ENCODE measurements at regions of chr1 and their contacts with region 1.

Region 1: DNA sequence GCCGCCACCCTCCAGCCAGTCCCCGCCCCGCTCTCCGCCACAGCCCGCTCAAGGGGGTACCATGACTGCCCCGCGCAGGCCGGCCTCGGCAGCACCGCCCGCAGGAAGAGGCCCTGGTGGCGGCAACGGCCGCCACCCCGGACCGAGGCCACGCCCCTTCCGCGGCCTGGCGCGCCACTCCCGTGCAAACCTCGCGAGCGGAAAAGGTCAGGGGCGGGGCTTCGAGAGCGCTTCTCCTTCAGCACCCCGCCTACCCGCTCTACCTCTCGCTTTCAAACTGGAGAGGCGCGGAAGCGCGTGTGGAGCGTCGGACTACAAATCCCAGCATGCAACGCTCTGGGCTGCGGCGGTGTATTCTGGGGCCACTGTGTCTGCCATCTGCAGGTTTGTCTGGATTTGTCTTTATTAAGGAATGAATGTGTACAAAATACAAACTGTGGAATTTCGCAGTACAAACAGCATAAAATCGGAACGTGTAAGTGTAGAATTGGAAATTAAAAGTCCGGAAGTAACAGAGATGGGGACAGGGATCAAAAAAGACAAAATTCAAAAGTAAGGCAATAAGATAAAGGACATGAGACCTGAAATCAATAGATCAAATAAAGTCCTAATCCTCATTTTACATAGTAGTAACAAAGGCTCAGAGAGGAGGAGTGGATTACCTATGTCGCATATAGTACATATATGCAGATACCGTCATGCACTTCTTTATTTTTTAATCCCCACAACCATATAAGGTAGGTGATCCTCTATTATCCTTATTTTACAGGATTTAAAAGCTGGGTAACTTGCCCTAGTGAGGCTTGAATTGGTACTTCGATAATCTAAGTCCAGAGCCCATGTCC is 464 bp upstream of the ADSS2 start:
- DNase-seq: peak; percentile 99
- H3K4me3 Mint-ChIP-seq: peak overlapping the region; percentile 97
- H3K27ac Mint-ChIP-seq: peak overlapping the region; percentile 86
- H3K4me1 Mint-ChIP-seq: peaks cover 37% of the 10 kb centered on the region
- H3K27me3 Mint-ChIP-seq: no peaks in the 10 kb centered on the region

Region 2: DNA sequence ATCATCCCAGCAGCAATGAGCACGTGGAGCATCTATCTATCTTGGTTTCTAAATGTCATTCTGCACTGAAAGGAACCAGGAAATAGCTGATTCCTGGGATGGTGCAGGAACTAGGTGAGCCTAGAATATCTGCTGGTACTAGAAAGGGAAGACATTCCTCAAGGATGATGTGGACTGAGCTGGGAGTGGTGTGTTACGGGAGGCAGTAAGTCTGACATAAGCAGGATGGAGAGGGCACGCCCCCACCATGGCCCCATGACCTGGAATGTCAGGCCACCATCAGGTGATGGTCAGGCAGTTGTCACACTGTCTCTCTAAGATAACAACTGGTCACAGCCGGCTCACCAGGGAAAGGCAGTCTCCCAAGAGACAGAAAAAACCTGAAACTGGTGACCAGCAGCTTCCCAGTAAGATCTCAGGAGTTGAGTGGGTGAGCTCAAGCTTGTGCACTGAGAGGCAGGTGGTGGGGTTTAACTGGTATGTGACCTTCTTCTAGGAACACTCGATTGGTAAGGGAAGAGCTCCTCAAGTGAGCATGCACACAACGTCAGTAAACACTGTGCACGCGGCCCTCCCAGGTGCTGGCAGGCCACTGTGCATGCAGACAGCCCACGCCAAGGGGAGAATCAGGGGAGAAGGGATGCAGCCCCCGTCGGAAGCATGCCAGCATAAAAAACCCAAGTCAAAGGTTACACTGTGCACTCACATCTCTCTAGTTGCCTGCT is 149.1 kb before region 1 on chr1:
- CTCF ChIA-PET with region 1: no interaction called
- intact Hi-C with region 1: loop called (anchors 1 kb)
- DNase-seq: no peak
- H3K4me3 Mint-ChIP-seq: no peak overlapping the region
- H3K27ac Mint-ChIP-seq: no peak overlapping the region
- H3K4me1 Mint-ChIP-seq: peaks cover 7% of the 10 kb centered on the region
- H3K27me3 Mint-ChIP-seq: peaks cover 3% of the 10 kb centered on the region

Region 3: DNA sequence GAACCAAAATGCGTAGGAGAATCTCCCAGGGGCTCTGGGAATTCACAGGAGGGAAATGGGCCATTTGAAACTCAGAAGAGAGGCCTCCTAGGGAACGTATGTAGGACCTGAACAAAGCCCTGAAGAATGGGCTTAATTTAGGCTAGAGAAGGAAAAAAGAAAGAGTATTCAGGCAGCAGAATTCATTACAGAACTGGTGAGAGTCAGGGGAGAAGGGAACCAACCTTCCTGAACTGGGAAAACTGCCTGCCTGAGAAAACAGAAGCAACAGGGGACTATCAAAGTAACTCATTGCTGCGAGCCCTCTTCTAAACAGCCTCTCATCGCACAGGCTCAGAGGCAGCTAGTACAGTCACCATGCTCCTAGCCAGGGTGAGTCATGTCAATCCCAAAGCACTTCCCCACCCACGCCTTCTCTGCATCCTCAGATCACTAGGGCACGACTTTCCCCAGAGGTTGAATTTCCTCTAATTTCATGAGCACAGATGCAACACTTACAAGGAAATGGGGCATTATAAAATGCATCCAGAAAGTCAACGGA is 98.6 kb before region 1 on chr1:
- CTCF ChIA-PET with region 1: no interaction called
- intact Hi-C with region 1: loop called (anchors 2 kb)
- DNase-seq: peak; percentile 77
- H3K4me3 Mint-ChIP-seq: no peak overlapping the region
- H3K27ac Mint-ChIP-seq: peak overlapping the region; percentile 50
- H3K4me1 Mint-ChIP-seq: peaks cover 26% of the 10 kb centered on the region
- H3K27me3 Mint-ChIP-seq: no peaks in the 10 kb centered on the region

Region 4: DNA sequence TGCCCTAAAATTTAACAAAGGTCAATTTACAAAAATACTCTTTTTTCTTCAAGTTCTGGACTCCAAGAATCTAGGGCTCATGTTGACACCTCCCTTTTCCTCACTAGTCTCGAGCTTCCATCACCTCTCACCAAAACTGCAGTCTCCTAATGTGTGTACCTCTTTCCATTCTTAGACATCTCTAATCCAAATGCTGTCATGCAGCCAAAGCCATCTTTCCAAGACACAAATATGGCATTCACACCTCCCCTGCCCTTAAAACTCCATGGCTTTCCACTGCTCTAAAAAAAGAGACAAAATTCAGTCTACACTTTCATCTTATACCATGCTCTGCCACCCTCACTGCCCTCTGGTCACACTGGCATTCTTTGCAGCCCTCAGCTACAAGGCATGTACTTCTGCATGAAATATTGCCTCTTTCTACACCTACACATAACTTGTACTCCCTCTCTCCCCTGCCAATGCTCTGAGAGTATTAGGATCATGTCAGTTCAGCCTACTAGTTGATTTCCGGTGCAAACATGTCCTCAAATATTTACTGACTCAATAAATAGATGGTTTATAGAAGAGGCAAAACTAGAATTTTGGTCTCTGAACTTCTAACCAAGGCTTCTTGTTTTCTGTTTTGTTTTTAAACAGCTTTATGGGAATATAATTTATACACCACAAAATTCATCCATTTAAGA is 27.4 kb before region 1 on chr1:
- CTCF ChIA-PET with region 1: no interaction called
- intact Hi-C with region 1: no loop called
- DNase-seq: no peak
- H3K4me3 Mint-ChIP-seq: no peak overlapping the region
- H3K27ac Mint-ChIP-seq: no peak overlapping the region
- H3K4me1 Mint-ChIP-seq: peaks cover 7% of the 10 kb centered on the region
- H3K27me3 Mint-ChIP-seq: no peaks in the 10 kb centered on the region

Region 5: DNA sequence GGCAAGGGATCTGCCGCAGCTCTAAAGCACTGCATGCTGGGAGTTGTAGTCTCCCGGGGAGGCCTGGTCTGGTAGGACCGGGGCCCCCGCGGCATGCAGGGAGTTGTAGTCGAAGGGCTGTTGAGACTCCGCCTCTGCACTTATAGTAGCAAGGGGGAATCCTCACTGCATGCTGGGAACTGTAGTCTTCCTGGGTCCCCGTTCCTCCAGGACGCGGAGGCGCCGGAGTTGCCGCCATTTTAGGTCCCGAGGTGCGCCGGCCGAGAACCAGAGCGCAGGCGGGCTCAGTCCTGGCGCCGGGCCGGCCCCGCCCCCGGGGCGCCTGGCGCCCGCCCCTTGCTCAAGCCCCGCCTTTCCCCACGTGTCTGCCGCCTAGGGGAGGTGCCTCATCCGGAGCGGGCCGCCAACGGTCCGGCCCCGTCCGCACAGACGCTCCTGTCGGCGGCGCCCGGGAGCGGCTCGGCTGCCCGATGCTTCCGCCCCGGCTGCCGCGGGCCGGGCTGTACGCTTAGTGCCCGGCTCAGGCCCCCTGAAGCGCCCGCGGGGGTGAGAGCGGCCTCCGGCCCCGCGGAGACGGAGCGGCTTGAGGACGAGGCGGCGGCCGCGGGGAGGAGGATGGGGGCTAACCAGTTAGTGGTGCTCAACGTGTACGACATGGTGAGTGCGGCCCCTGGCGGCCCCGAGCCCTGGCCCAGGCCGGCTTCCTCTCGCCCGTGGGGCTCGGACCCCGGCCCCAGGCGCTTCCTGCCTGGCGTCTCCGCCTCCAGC is 200.7 kb after region 1 on chr1 and contains the start of gene DESI2:
- CTCF ChIA-PET with region 1: no interaction called
- intact Hi-C with region 1: loop called (anchors 1 kb)
- DNase-seq: peak; percentile 99
- H3K4me3 Mint-ChIP-seq: peak within 1 kb of the TSS; percentile 82
- H3K27ac Mint-ChIP-seq: peak within 1 kb of the TSS; percentile 88
- H3K4me1 Mint-ChIP-seq: peaks cover 18% of the 10 kb centered on the region
- H3K27me3 Mint-ChIP-seq: no peaks in the 10 kb centered on the region
- total RNA-seq, gene DESI2: 31.7 to 32.5 TPM

Region 6: DNA sequence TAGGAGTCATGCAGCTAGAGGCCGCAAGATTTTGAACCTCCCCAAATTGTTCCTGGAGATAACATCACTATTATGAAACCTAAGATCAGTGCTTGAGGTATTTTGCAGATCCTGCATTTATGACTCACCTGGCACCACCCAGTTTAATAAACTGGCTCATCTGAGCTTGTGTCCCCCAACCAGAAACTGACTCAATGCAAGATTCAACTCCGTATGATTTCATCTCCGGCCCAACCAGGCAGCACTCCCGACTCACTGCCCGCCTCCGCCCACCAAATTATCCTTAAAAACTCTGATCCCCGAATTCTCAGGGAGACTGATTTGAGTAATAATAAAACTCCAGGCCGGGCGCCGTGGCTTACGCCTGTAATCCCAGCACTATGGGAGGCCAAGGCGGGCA is 287.9 kb after region 1 on chr1:
- CTCF ChIA-PET with region 1: no interaction called
- intact Hi-C with region 1: no loop called
- DNase-seq: no peak
- H3K4me3 Mint-ChIP-seq: no peak overlapping the region
- H3K27ac Mint-ChIP-seq: no peak overlapping the region
- H3K4me1 Mint-ChIP-seq: peaks cover 4% of the 10 kb centered on the region
- H3K27me3 Mint-ChIP-seq: no peaks in the 10 kb centered on the region

Region 7: DNA sequence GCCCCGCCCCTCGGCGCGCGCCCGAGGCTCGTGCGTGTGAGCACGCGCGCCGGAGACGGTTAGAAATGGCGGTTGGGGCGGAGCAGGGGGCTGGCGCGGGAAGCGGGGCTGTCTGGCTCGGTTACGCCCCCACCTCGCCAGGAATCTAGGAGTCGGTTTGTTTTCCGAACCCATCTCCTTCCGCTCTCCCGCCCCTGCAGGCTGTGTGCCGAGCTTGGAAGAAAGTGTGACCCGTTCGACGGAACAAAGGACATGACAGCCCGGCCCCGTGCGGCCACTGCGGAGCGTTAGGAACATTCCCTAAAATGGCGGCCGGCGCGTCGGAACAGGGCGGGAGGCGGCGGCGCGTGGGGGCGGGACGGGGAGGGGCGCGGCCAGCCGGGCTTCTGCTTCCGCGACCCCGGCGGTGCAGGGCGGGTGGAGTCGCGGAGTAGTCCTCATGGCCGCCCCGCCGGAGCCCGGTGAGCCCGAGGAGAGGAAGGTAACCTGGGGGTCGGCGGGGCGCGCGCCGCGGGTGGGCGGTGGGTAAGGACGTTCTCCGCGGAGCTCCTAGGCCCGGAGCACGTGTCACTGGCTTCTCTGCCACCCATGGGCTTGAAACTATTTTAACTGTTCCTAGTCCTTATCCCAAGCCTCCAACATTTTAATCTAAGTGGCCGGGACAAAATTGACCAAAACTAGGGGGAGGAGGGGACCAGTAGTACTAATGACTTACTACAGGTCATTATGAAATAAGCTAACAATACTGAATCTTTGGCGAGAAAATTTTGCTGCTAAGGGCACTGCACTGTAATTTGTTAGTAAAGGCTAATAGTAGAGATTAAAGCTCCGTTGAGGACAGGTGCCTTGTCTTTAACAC is 383.3 kb after region 1 on chr1 and contains the start of gene COX20:
- CTCF ChIA-PET with region 1: no interaction called
- intact Hi-C with region 1: loop called (anchors 1 kb)
- DNase-seq: peak; percentile 85
- H3K4me3 Mint-ChIP-seq: peak within 1 kb of the TSS; percentile 94
- H3K27ac Mint-ChIP-seq: peak within 1 kb of the TSS; percentile 99
- H3K4me1 Mint-ChIP-seq: peaks cover 38% of the 10 kb centered on the region
- H3K27me3 Mint-ChIP-seq: no peaks in the 10 kb centered on the region
- total RNA-seq, gene COX20: 21.4 to 24.2 TPM